ENCODE measurements at regions of chr6 and their contacts with region 1.

Region 1: DNA sequence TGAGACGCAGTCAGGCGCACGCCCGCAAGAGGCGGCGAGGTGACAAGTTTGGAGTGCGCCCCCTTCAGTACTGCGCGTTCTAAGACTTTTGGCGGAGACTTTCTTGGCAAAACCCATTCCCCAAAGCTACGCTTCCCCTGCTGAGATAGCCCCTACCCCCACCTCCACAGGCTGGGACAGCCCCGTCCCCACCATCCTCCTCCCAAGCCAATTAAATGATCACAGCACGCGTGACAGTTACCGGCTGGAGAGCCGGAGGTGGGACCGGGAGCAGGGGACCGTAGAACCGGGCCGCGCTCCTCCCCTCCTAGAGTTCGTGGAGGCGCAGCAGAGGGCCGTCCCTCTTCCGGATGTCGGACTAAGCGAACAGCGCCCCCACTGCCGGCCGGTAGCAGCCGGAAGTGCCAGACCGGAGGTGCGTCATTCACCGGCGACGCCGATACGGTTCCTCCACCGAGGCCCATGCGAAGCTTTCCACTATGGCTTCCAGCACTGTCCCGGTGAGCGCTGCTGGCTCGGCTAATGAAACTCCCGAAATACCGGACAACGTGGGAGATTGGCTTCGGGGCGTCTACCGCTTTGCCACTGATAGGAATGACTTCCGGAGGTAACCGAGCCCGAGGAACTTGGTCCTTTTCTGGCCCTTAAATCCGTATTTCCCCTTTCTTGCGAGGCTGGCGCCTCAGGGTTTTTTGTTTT is at the start of gene TOMM6:
- DNase-seq: peak; percentile 92 to 97
- H3K4me3 ChIP-seq: peak within 1 kb of the TSS; percentile 76 to 93
- H3K27ac ChIP-seq: peak within 1 kb of the TSS; percentile 86 to 98
- H3K4me1 ChIP-seq: peaks cover 0 to 31% (median 19%) of the 10 kb centered on the region in 4 donors
- H3K27me3 ChIP-seq: no peaks in the 10 kb centered on the region
- CTCF ChIP-seq: peak; percentile 91 to 95

Region 2: DNA sequence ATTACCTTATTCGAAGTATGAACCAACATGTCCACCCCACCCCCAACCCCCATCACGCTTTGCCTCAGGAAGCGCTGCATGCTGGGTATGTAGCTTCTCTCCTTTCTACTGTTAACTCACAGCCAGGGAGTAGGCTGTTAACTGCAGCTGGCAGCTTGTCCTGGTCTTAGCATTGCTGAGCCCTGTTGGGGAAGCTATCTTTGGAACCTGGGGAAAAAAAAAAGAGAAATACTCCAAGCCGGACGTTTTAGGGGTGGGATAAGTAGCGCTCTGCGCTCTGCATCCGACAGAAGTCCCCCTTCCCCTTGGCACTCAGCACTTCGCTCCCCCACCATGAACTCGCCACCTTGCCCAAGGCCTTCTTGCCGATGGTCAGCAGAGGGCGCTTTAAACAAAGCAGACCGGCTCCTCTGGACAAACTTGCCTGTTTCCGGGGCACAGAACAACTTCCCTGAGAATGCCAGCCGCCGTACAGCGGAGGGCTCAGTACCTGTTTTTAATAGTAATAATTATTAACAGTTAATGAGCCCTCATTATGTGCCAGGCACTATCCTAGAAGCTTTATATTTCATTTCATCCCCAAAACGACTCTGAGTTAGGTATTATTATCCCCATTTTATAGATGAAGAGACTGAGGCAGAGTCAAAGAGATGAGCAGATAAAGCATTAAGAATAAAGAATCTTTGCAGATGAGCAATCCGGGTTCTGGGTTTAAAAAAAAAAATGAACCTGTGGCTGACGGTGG is 184.3 kb before region 1 on chr6:
- intact Hi-C with region 1: loop called (anchors 5 kb)
- DNase-seq: peak; percentile 68 to 83
- H3K4me3 ChIP-seq: no peak overlapping the region
- H3K27ac ChIP-seq: no peak overlapping the region
- H3K4me1 ChIP-seq: peaks cover 0 to 17% (median 6%) of the 10 kb centered on the region in 4 donors
- H3K27me3 ChIP-seq: peaks cover 0 to 3% of the 10 kb centered on the region in 2 donors
- CTCF ChIP-seq: peak; percentile 81 to 88

Region 3: DNA sequence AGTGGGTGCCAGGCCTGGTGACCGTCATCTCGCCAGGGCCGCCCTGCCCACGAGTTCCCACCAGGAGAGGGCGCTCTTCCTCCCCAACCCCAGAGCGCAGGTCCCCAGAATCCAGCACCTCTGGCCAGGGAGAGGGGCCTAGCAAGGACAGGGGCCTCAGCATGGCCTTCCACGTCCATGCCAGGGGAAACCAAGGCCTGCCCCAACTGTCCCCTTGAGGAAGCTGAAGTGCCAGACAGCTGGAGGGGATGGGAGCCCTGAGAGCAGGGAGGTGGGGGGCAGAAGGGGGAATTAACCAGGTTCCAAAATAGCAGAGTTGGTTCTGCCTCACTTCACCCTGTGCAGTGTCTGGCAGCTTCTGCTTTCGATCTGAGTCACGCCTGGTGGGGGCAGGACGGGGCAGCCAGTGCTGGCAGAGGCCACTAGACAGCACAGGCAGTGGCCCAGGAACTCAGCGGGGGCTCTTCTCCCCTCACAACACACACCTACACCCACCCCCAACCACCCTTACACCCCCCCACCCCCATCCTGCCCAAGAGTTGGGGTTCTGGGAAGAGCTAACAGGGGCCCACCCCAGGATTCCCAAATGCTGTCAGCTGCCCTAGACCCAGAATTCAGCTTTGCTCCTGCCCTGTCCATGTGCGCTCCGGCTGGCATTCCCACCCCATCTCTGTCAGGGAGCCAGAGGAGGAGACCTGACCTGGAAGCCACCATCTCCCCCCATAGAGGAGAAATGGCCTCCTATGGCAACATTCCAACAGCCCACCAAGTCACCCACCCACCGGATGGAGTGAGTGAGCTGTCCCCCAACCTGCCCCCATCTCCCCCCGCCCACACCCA is 81.2 kb before region 1 on chr6:
- intact Hi-C with region 1: loop called (anchors 10 kb)
- DNase-seq: peak; percentile 87 to 95
- H3K4me3 ChIP-seq: peak overlapping the region; percentile 0
- H3K27ac ChIP-seq: peak overlapping the region; percentile 86 to 93
- H3K4me1 ChIP-seq: peaks cover 0 to 52% (median 40%) of the 10 kb centered on the region in 4 donors
- H3K27me3 ChIP-seq: no peaks in the 10 kb centered on the region
- CTCF ChIP-seq: peak; percentile 70 to 75

Region 4: GRCh38 chr6:41723530-41724227 is 63.7 kb before region 1 on chr6:
- intact Hi-C with region 1: no loop called
- DNase-seq: peak; percentile 80 to 89
- H3K4me3 ChIP-seq: no peak overlapping the region
- H3K27ac ChIP-seq: peak overlapping the region; percentile 50 to 61
- H3K4me1 ChIP-seq: peaks cover 0 to 48% (median 29%) of the 10 kb centered on the region in 4 donors
- H3K27me3 ChIP-seq: no peaks in the 10 kb centered on the region
- CTCF ChIP-seq: peak; percentile 13 to 24

Region 5: GRCh38 chr6:41895300-41896233 is 108.2 kb after region 1 on chr6 and contains the start of gene USP49:
- intact Hi-C with region 1: loop called (anchors 5 kb)
- DNase-seq: peak; percentile 88 to 92
- H3K4me3 ChIP-seq: peak within 1 kb of the TSS; percentile 70 to 87
- H3K27ac ChIP-seq: peak within 1 kb of the TSS; percentile 75
- H3K4me1 ChIP-seq: peaks cover 0 to 22% (median 8%) of the 10 kb centered on the region in 4 donors
- H3K27me3 ChIP-seq: no peaks in the 10 kb centered on the region
- CTCF ChIP-seq: no peak

Region 6: DNA sequence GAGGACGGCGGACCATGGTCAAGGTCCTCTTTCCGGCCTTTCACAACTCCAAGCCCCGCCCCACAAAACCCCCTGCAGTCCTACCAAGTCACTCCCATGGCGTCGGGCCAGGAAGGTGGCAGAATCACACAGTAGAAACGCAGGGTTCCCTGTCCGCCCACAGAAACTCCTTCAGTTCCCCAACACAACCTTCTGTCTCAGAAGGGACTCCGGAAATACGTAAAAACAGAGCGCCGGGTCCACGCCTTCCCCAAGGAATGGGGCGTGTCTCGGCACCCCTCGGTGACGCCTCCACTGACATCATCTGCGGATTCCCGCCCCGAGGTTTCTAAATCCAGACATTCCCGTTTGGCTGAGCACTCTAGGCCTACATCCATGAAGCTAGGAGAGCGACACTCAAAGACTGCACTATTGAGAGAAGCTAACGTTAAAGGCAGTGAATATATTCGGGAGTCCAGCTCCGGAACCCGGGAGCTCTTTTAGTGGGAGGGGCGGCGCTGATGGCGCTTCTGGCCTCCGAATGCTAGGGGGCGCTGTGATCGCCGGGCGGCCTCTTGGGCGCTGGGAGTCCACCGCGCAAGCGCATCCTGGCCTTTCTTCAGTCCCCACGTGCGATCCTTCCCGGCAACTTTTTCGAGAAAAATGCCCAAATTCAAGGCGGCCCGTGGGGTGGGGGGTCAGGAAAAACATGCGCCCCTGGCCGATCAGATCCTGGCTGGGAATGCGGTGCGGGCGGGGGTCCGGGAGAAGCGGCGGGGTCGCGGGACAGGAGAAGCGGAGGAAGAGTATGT is 133.7 kb after region 1 on chr6 and contains the starts of genes BYSL and MED20:
- intact Hi-C with region 1: loop called (anchors 1 kb)
- DNase-seq: peak; percentile 92 to 94
- H3K4me3 ChIP-seq: peak within 1 kb of the TSS; percentile 80 to 81
- H3K27ac ChIP-seq: peak within 1 kb of the TSS; percentile 87 to 93
- H3K4me1 ChIP-seq: peaks cover 0 to 56% (median 38%) of the 10 kb centered on the region in 4 donors
- H3K27me3 ChIP-seq: no peaks in the 10 kb centered on the region
- CTCF ChIP-seq: peak; percentile 96 to 98

Region 7: GRCh38 chr6:42217519-42218367 is 430.4 kb after region 1 on chr6 and contains the start of gene MRPS10:
- intact Hi-C with region 1: loop called (anchors 10 kb)
- DNase-seq: peak; percentile 92 to 95
- H3K4me3 ChIP-seq: peak within 1 kb of the TSS; percentile 71 to 74
- H3K27ac ChIP-seq: peak within 1 kb of the TSS; percentile 71 to 82
- H3K4me1 ChIP-seq: peaks cover 0 to 21% (median 7%) of the 10 kb centered on the region in 4 donors
- H3K27me3 ChIP-seq: no peaks in the 10 kb centered on the region
- CTCF ChIP-seq: no peak

Region 8: DNA sequence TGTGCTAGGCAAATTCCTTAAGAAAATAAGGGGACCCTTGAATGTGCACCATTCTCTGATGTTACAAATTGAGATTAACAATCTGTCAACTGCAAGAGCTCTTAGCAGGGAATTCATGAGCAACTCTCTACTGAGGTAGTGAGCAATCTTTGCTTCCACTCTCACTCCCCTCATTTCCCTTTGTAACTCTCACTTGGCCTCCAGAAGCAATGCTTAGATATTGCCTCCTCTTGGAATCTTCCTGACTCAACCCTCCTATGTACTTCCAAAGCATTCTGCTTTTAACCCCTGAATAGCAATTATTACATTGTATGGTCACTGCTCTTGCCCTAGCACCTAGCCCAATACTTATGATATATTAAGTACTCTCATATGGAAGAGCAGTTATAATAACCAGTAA is 1772.0 kb after region 1 on chr6:
- intact Hi-C with region 1: no loop called
- DNase-seq: no peak
- H3K4me3 ChIP-seq: no peak overlapping the region
- H3K27ac ChIP-seq: no peak overlapping the region
- H3K4me1 ChIP-seq: no peaks in the 10 kb centered on the region
- H3K27me3 ChIP-seq: no peaks in the 10 kb centered on the region
- CTCF ChIP-seq: no peak